Activated B cell treated with CpG ODN at 0.5 μM for 24 hours (primary cell): ENCODE measurements at regions of chr2 and their contacts with region 1.

Region 1: GRCh38 chr2:164785457-164785856 is 56.2 kb downstream of the COBLL1 start:
- DNase-seq: no peak
- ATAC-seq: no peak
- H3K4me3 Mint-ChIP-seq: no peak overlapping the region
- H3K27ac Mint-ChIP-seq: no peak overlapping the region
- H3K4me1 Mint-ChIP-seq: peaks cover 32% of the 10 kb centered on the region
- H3K27me3 Mint-ChIP-seq: no peaks in the 10 kb centered on the region
- CTCF ChIP-seq: no peak

Region 2: DNA sequence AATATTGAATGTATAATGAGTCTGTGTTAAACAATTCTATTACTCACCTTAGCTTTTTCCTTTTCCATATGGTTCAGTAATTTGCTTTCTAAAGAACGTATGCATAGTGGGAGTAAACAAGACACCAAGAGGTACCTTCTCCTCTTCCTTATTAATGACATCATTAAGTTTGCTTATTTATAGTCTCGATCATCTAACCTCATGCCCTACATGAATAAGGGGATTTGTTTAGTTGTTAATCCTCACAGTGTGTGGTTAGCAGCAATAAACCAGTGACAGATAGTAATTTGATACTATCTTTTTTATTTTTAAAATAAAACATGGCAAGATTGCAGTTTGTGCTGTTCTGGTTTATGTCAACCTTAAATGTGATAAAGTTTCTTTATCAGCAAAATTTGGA is 13.6 kb before region 1 on chr2:
- CTCF ChIA-PET with region 1: no interaction called
- POLR2A ChIA-PET with region 1: interaction called, 3 read pairs
- intact Hi-C with region 1: loop called (anchors 1 kb)
- DNase-seq: no peak
- ATAC-seq: no peak
- H3K4me3 Mint-ChIP-seq: no peak overlapping the region
- H3K27ac Mint-ChIP-seq: no peak overlapping the region
- H3K4me1 Mint-ChIP-seq: peaks cover 10% of the 10 kb centered on the region
- H3K27me3 Mint-ChIP-seq: no peaks in the 10 kb centered on the region
- CTCF ChIP-seq: no peak

Region 3: DNA sequence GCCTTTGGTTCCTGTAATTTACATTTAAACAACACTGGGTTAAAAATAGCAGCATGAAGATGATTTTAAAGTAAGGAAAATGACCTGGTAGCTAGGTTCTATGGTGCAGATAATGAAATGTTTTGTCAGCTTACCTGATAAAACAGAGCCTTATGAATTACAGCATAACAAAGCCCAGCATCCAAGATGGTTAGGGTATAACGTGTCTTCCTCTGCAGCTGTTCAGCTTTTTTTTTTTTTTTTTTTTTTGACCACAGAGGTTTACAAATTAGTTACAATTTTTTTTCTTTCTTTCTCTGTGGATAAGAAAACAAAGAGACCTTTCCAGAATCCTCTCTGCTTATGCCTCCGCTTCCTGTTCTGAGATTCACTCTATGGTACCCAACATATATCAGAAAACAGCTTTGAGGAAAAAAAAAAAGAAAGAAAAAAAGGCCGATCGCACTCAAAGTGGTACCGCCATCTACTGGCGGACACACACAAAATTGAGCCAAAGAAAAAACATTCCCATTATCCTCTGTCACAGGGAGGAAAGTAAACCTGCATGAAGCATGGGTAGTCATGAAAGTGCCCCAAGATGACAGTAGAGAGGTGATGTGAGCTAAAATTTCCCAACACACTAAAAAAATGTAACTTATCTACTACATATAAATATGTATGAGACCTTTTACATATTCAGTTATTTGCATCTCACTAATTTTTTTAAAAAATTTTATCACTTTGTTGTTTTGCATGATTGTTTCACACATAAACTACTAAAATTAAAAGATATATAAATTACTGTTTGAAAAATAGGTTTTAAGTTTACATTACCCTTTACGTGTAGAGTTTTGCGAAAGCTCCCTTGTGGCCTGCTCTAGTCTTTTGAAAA is 418.5 kb after region 1 on chr2 and contains the start of gene SCN3A:
- CTCF ChIA-PET with region 1: no interaction called
- POLR2A ChIA-PET with region 1: no interaction called
- intact Hi-C with region 1: no loop called
- DNase-seq: no peak
- ATAC-seq: peak; percentile 57
- H3K4me3 Mint-ChIP-seq: peak within 1 kb of the TSS; percentile 80
- H3K27ac Mint-ChIP-seq: peak within 1 kb of the TSS; percentile 73
- H3K4me1 Mint-ChIP-seq: peaks cover 29% of the 10 kb centered on the region
- H3K27me3 Mint-ChIP-seq: no peaks in the 10 kb centered on the region
- CTCF ChIP-seq: no peak
- total RNA-seq, gene SCN3A: 2.2 and 2.6 TPM in 2 replicates